ENCODE measurements at regions of chr7 and their contacts with region 1.

Region 1: GRCh38 chr7:52355049-52355448 is 680.4 kb upstream of the POM121L12 start:
- DNase-seq: peak; percentile 41
- H3K4me3 ChIP-seq: no peak overlapping the region
- H3K27ac ChIP-seq: no peak overlapping the region
- H3K4me1 ChIP-seq: no peaks in the 10 kb centered on the region
- H3K27me3 ChIP-seq: no peaks in the 10 kb centered on the region
- CTCF ChIP-seq: no peak
- POLR2A ChIP-seq: no peak

Region 2: GRCh38 chr7:52184006-52184703 is 170.9 kb before region 1 on chr7:
- CTCF ChIA-PET with region 1: no interaction called
- POLR2A ChIA-PET with region 1: no interaction called
- dilution Hi-C with region 1: no loop called
- intact Hi-C with region 1: loop called (anchors 10 kb)
- DNase-seq: no peak
- H3K4me3 ChIP-seq: no peak overlapping the region
- H3K27ac ChIP-seq: no peak overlapping the region
- H3K4me1 ChIP-seq: no peaks in the 10 kb centered on the region
- H3K27me3 ChIP-seq: no peaks in the 10 kb centered on the region
- CTCF ChIP-seq: no peak
- POLR2A ChIP-seq: no peak

Region 3: GRCh38 chr7:52369922-52370321 is 14.9 kb after region 1 on chr7:
- CTCF ChIA-PET with region 1: no interaction called
- POLR2A ChIA-PET with region 1: no interaction called
- dilution Hi-C with region 1: no loop called
- intact Hi-C with region 1: no loop called
- DNase-seq: no peak
- H3K4me3 ChIP-seq: no peak overlapping the region
- H3K27ac ChIP-seq: no peak overlapping the region
- H3K4me1 ChIP-seq: no peaks in the 10 kb centered on the region
- H3K27me3 ChIP-seq: no peaks in the 10 kb centered on the region
- CTCF ChIP-seq: no peak
- POLR2A ChIP-seq: no peak

Region 4: GRCh38 chr7:52463341-52463740 is 108.3 kb after region 1 on chr7:
- CTCF ChIA-PET with region 1: no interaction called
- POLR2A ChIA-PET with region 1: no interaction called
- dilution Hi-C with region 1: no loop called
- intact Hi-C with region 1: loop called (anchors 5 kb)
- DNase-seq: peak; percentile 80
- H3K4me3 ChIP-seq: peak overlapping the region in 1 of 3 experiments; percentile 30
- H3K27ac ChIP-seq: peak overlapping the region; percentile 13
- H3K4me1 ChIP-seq: peaks cover 17% of the 10 kb centered on the region
- H3K27me3 ChIP-seq: no peaks in the 10 kb centered on the region
- CTCF ChIP-seq: no peak
- POLR2A ChIP-seq: no peak

Measured in endothelial cell of umbilical vein (primary cell).